ENCODE measurements at regions of chr6 and their contacts with region 1.

Region 1: DNA sequence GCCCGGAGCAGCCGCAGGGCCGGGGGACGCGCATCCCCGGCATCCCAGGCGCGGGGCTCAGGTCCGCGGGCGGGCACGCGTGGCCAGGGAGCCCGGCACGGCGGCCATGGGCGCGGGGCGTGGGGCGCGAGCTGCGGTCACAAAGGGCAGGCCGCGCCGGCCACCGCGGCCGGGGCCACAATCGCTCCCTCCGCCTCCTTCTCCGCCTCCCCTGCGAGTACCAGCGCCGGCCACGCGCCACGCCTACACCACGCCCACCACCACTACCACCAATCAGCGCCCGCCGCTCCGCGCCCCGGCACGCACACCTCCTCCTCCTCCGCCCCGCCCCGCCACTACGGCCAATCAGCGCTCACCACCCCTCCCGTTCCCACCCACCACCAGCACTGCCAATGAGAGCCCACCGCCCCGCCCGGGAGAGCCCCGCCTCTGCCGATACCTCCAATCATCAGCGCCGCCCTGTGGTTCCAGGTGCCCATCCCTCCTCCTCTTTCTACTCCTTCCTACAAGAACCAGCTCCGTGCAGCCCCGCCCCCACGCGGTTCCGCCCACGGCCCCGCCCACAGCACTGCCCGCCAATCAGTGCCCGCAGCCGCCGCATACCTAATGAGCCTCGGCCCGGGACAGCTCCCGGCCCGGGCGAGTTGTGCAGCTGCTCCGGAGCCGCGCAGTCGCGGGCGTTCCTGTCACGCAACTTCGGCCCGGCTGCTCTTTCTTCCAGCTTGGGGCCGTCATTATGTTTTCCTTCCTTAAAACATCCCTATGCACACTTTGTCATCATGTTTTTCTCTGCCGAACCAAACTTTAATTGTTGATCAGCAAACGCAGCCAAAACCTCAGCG is at the start of gene RPS6KA2:
- DNase-seq: peak; percentile 100
- H3K4me3 ChIP-seq: peak within 1 kb of the TSS; percentile 74 to 87 (median 83)
- H3K27ac ChIP-seq: peak within 1 kb of the TSS; percentile 90
- H3K4me1 ChIP-seq: peaks cover 37% of the 10 kb centered on the region
- H3K27me3 ChIP-seq: no peaks in the 10 kb centered on the region
- CTCF ChIP-seq: peak in 1 of 2 donors; percentile 16
- POLR2A ChIP-seq: peak; percentile 90
- total RNA-seq, gene RPS6KA2: 72.6 and 75.8 TPM in 2 replicates

Region 2: GRCh38 chr6:166342349-166343149 is 284.7 kb before region 1 on chr6 and contains the start of gene SFT2D1:
- CTCF ChIA-PET with region 1: no interaction called
- POLR2A ChIA-PET with region 1: no interaction called
- dilution Hi-C with region 1: no loop called
- intact Hi-C with region 1: loop called (anchors 5 kb)
- DNase-seq: peak; percentile 89
- H3K4me3 ChIP-seq: peak within 1 kb of the TSS; percentile 79 to 99 (median 93)
- H3K27ac ChIP-seq: peak within 1 kb of the TSS; percentile 95
- H3K4me1 ChIP-seq: peaks cover 13% of the 10 kb centered on the region
- H3K27me3 ChIP-seq: peaks cover 2 to 4% of the 10 kb centered on the region in 2 experiments
- CTCF ChIP-seq: no peak
- POLR2A ChIP-seq: peak; percentile 96
- total RNA-seq, gene SFT2D1: 21.2 and 22.9 TPM in 2 replicates

Region 3: DNA sequence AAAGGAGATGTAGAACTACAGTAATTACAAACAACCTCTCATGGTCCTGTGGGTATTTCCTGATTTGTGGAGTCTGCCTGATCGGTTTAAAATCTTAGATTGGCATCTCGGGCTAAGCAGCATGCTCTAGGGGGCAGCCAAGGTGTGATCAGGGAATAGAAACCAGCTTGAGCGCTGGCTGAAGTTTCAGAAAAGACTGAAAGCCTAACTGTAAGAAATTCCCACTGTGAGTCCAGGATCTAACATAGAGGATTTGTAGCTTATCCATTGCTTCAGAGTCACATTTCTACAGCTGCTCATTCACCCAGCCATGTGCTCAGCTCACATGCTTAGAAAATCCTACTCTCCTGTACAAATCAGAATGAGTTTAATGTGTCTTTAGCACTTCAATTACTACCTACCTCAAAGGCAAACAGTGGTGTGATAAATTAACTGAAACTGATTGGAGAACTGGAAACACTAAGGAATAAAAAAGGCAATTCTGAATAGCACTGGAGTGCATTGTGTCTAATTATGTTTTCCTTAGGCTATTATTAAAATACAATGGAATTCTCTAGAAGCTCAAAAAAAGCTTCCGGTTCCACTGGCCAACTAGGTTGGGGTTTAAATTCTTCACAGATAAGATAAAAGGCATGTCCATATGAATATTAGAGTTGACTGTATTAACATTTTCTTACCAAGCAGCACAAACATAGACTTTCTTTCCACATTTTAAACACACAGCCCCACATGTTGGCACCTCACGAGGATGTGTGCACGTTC is 170.7 kb before region 1 on chr6:
- CTCF ChIA-PET with region 1: no interaction called
- POLR2A ChIA-PET with region 1: no interaction called
- dilution Hi-C with region 1: no loop called
- intact Hi-C with region 1: loop called (anchors 1 kb)
- DNase-seq: peak; percentile 68
- H3K4me3 ChIP-seq: no peak overlapping the region
- H3K27ac ChIP-seq: no peak overlapping the region
- H3K4me1 ChIP-seq: peaks cover 13% of the 10 kb centered on the region
- H3K27me3 ChIP-seq: no peaks in the 10 kb centered on the region
- CTCF ChIP-seq: peak; percentile 24 to 34
- POLR2A ChIP-seq: no peak

Region 4: GRCh38 chr6:166556871-166557322 is 70.4 kb before region 1 on chr6:
- CTCF ChIA-PET with region 1: interaction called, 6 read pairs
- POLR2A ChIA-PET with region 1: interaction called, 6 read pairs
- dilution Hi-C with region 1: no loop called
- intact Hi-C with region 1: loop called (anchors 1 kb)
- DNase-seq: peak; percentile 100
- H3K4me3 ChIP-seq: no peak overlapping the region
- H3K27ac ChIP-seq: peak overlapping the region; percentile 92
- H3K4me1 ChIP-seq: peaks cover 27% of the 10 kb centered on the region
- H3K27me3 ChIP-seq: no peaks in the 10 kb centered on the region
- CTCF ChIP-seq: no peak
- POLR2A ChIP-seq: no peak

Region 5: DNA sequence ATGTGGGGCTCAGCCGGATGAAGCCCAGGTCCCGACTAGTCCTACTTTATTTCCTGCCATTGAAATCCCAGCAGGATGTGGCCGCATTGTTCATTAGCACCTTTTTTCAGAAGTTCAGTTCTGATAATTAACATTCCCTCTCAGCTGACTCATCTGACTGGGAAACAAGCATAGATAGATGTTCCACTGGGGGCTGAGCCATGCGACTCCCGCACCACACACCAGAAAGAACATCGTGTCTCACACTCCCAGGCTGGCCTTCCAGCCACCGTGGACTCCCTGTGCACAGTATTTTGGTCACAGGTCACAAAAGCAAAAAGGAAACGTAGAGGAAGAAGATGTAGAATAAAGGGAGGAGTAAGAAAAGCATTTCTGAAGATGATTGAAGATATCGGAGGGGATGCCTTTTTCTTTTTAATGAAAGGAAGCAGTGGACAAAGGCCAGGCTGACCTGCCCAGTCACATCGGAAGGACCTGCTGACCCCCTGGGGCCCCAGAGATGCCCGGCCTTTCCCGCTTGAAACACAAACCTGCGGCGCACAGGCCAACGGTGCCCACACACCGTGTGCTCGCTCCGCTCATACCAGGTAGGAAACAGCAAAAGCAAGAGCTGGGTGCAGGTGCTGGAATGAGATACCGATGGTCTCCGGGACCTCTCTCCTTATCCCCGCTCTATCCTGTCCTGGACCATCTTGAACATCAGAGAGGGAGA is 12.0 kb before region 1 on chr6:
- CTCF ChIA-PET with region 1: interaction called, 7 read pairs
- POLR2A ChIA-PET with region 1: interaction called, 6 read pairs
- dilution Hi-C with region 1: no loop called
- intact Hi-C with region 1: loop called (anchors 1 kb)
- DNase-seq: peak; percentile 86
- H3K4me3 ChIP-seq: no peak overlapping the region
- H3K27ac ChIP-seq: peak overlapping the region; percentile 58
- H3K4me1 ChIP-seq: peaks cover 40% of the 10 kb centered on the region
- H3K27me3 ChIP-seq: no peaks in the 10 kb centered on the region
- CTCF ChIP-seq: no peak
- POLR2A ChIP-seq: no peak

Region 6: DNA sequence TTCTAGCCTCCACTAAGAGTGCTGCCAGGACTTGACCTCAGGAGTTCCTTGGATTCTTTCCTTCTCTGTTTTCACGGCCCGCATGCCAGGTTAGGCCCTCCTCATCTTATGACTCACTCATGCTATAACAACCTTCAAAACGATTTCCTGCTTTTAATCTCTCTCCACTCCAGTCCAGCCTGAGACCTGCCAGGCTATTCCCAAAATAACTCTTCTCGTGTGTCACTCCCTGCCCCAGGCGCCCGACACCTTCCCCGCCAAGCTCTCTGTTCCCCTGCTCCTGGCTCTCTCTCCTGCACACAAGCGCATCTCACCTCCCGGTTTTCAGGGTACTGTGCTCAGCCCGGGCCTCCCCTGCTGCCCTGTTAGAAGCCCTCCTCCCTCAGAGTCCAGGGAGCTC is 63.9 kb after region 1 on chr6:
- CTCF ChIA-PET with region 1: interaction called, 3 read pairs
- POLR2A ChIA-PET with region 1: interaction called, 3 read pairs
- dilution Hi-C with region 1: no loop called
- intact Hi-C with region 1: loop called (anchors 1 kb)
- DNase-seq: peak; percentile 88
- H3K4me3 ChIP-seq: no peak overlapping the region
- H3K27ac ChIP-seq: peak overlapping the region; percentile 68
- H3K4me1 ChIP-seq: peaks cover 20% of the 10 kb centered on the region
- H3K27me3 ChIP-seq: no peaks in the 10 kb centered on the region
- CTCF ChIP-seq: no peak
- POLR2A ChIP-seq: no peak

Region 7: DNA sequence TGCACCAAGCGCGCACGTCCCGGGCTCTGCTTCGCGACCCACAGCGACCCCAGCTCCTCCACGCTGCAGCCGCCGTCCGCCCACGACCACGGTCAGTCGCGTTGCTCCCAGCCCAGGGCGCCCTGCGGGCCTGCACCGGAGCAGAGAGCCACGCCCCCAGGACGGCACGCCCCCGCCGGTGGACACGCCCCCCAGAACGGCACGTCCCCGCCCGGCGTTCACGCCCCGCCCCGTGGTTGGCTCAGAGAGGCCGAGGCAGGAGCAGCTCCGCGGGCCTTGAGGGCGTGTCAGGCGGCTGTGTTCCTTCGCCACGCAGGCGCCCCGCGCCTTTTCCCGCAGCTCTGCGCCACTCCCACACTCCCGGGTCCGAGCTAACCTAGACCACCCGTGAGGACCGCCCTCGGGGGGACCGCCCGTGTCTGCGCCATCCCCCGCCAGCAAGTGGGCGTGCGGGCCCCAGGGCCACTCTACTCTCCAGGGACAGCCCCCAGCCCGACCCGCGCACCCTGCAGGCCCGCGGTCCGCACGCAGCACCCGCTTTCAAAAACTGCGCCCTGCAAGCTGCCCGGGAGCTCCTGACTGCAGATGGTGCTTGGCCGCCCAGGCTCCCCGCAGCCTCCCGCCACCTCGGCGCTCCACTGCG is 329.3 kb after region 1 on chr6 and contains the start of gene RNASET2:
- CTCF ChIA-PET with region 1: no interaction called
- POLR2A ChIA-PET with region 1: no interaction called
- dilution Hi-C with region 1: no loop called
- intact Hi-C with region 1: loop called (anchors 1 kb)
- DNase-seq: peak; percentile 91
- H3K4me3 ChIP-seq: peak within 1 kb of the TSS; percentile 60 to 63 (median 61)
- H3K27ac ChIP-seq: no peak within 1 kb of the TSS
- H3K4me1 ChIP-seq: peaks cover 21% of the 10 kb centered on the region
- H3K27me3 ChIP-seq: no peaks in the 10 kb centered on the region
- CTCF ChIP-seq: no peak
- POLR2A ChIP-seq: peak; percentile 20
- total RNA-seq, gene RNASET2: 10.0 and 10.7 TPM in 2 replicates

Measured in endothelial cell of umbilical vein (primary cell).